ENCODE measurements at regions of chrX and their contacts with region 1.

Region 1: GRCh38 chrX:37349221-37350064 is at the start of gene PRRG1:
- DNase-seq: peak; percentile 83
- H3K4me3 Mint-ChIP-seq: peak within 1 kb of the TSS; percentile 89
- H3K27ac Mint-ChIP-seq: peak within 1 kb of the TSS; percentile 89
- H3K4me1 Mint-ChIP-seq: peaks cover 22% of the 10 kb centered on the region
- H3K27me3 Mint-ChIP-seq: peaks cover 54% of the 10 kb centered on the region
- CTCF ChIP-seq: no peak
- total RNA-seq, gene PRRG1: 10.2 and 10.5 TPM in 2 replicates

Region 2: DNA sequence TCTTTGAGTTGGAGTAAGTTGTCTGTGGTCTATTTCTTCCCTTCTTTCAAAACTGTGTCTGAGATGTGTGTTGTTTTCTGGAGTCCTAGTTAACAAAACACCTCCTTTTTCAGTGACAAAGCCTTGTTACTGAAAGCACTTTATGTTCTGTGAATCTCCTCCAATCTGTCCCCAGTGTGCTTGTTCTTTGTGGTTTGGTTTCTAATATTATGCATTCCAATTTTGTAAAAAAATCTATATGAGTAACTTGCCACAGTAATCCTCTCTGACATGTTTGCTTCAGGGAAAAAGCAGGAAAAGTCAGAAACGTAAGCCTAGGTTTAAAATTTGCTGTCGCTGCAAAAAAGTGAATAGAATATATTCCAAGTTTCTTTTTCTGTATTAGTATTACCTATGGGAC is 12.2 kb after region 1 on chrX:
- CTCF ChIA-PET with region 1: no interaction called
- POLR2A ChIA-PET with region 1: interaction called, 11 read pairs
- intact Hi-C with region 1: no loop called
- DNase-seq: peak; percentile 2
- H3K4me3 Mint-ChIP-seq: peak overlapping the region; percentile 31
- H3K27ac Mint-ChIP-seq: no peak overlapping the region
- H3K4me1 Mint-ChIP-seq: peaks cover 16% of the 10 kb centered on the region
- H3K27me3 Mint-ChIP-seq: peaks cover 62% of the 10 kb centered on the region
- CTCF ChIP-seq: no peak

Region 3: GRCh38 chrX:37380920-37381319 is 31.5 kb after region 1 on chrX:
- CTCF ChIA-PET with region 1: no interaction called
- POLR2A ChIA-PET with region 1: interaction called, 20 read pairs
- intact Hi-C with region 1: no loop called
- DNase-seq: peak; percentile 81
- H3K4me3 Mint-ChIP-seq: no peak overlapping the region
- H3K27ac Mint-ChIP-seq: no peak overlapping the region
- H3K4me1 Mint-ChIP-seq: no peaks in the 10 kb centered on the region
- H3K27me3 Mint-ChIP-seq: peaks cover 38% of the 10 kb centered on the region
- CTCF ChIP-seq: no peak

Region 4: GRCh38 chrX:37454537-37455285 is 105.3 kb after region 1 on chrX:
- CTCF ChIA-PET with region 1: no interaction called
- POLR2A ChIA-PET with region 1: interaction called, 5 read pairs
- intact Hi-C with region 1: loop called (anchors 10 kb)
- DNase-seq: peak; percentile 83
- H3K4me3 Mint-ChIP-seq: no peak overlapping the region
- H3K27ac Mint-ChIP-seq: peak overlapping the region; percentile 43
- H3K4me1 Mint-ChIP-seq: peaks cover 26% of the 10 kb centered on the region
- H3K27me3 Mint-ChIP-seq: no peaks in the 10 kb centered on the region
- CTCF ChIP-seq: no peak

Region 5: DNA sequence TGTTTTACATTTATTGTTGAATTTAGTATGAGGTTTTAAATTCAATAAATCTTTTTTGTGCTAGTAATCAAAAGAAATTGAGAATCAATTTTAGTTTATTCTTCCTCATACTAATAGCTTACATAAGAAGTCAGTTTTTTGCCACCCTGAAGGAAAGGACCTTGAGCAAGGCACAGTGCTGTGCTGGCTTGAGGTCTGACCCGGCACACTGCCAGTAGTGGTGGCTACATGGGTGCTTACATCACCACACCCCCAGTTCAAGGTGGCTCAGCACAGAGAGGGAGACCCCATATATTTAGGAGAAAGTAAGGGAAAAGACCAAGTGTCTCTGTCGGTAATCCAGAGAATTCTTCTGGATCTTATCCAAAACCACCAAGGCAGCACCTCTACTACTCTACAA is 136.0 kb after region 1 on chrX:
- CTCF ChIA-PET with region 1: no interaction called
- POLR2A ChIA-PET with region 1: no interaction called
- intact Hi-C with region 1: loop called (anchors 10 kb)
- DNase-seq: no peak
- H3K4me3 Mint-ChIP-seq: no peak overlapping the region
- H3K27ac Mint-ChIP-seq: no peak overlapping the region
- H3K4me1 Mint-ChIP-seq: peaks cover 6% of the 10 kb centered on the region
- H3K27me3 Mint-ChIP-seq: peaks cover 25% of the 10 kb centered on the region
- CTCF ChIP-seq: no peak